ENCODE measurements at regions of chr2 and their contacts with region 1.

Region 1: DNA sequence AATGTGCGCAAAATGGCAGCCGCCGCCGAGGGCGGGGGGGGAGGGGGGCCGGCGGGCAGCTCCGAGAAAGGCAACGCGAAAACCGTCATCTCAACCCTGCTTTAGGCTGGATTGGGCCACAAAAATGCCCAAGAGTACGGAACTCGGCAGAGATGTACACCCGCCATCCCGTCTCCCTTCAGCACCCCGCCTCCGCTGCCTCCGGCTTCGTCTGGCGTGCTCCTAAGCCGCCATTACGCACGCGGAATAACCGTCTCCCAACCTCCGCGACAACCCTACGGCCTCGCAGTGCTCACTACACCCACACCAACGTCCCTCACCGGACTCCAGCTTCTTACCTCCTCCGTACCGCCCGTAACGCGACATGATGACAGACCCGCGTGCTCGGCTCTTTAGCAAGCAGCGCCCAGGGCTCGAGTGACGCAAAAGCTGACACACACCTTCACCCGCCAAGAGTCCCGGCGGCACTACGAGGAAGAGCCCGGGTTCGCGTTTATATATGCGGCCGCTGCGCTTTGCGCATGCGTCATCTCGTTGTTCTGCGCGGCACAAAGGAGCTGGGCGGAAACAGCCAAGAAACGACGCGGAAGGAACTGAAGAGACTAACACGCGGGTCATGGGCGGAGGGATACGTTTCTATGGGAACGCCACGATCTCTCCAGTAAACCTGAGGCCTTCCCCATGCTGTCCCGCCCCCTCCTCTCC is at the start of gene SRSF7:
- DNase-seq: peak; percentile 95 to 99 (median 96)
- H3K4me3 ChIP-seq: peak within 1 kb of the TSS; percentile 96
- H3K4me3 Mint-ChIP-seq: peak within 1 kb of the TSS; percentile 95 to 100 (median 99)
- H3K27ac ChIP-seq: peak within 1 kb of the TSS; percentile 98
- H3K27ac Mint-ChIP-seq: peak within 1 kb of the TSS; percentile 98 to 100 (median 100)
- H3K4me1 ChIP-seq: peaks cover 55% of the 10 kb centered on the region
- H3K4me1 Mint-ChIP-seq: peaks cover 61 to 67% (median 65%) of the 10 kb centered on the region in 3 donors
- H3K27me3 ChIP-seq: no peaks in the 10 kb centered on the region
- H3K27me3 Mint-ChIP-seq: peaks cover 0 to 18% of the 10 kb centered on the region in 2 donors
- total RNA-seq, gene SRSF7: 378 to 381 TPM

Region 2: GRCh38 chr2:38377050-38377828 is 373.8 kb before region 1 on chr2 and contains the start of gene ATL2:
- CTCF ChIA-PET with region 1: interaction called, 3 read pairs
- POLR2A ChIA-PET with region 1: interaction called, 11 read pairs
- DNase-seq: peak; percentile 89 to 95 (median 91)
- H3K4me3 ChIP-seq: peak within 1 kb of the TSS; percentile 72
- H3K4me3 Mint-ChIP-seq: peak within 1 kb of the TSS; percentile 94 to 98 (median 95)
- H3K27ac ChIP-seq: peak within 1 kb of the TSS; percentile 86
- H3K27ac Mint-ChIP-seq: peak within 1 kb of the TSS; percentile 94 to 98 (median 96)
- H3K4me1 ChIP-seq: peaks cover 44% of the 10 kb centered on the region
- H3K4me1 Mint-ChIP-seq: peaks cover 52 to 76% (median 67%) of the 10 kb centered on the region in 3 donors
- H3K27me3 ChIP-seq: no peaks in the 10 kb centered on the region
- H3K27me3 Mint-ChIP-seq: peaks cover 0 to 1% of the 10 kb centered on the region in 2 donors
- total RNA-seq, gene ATL2: 61.5 to 62.4 TPM

Region 3: GRCh38 chr2:38778687-38779082 is 27.6 kb after region 1 on chr2:
- CTCF ChIA-PET with region 1: no interaction called
- POLR2A ChIA-PET with region 1: interaction called, 26 read pairs
- DNase-seq: no peak
- H3K4me3 ChIP-seq: peak overlapping the region; percentile 86
- H3K4me3 Mint-ChIP-seq: peak overlapping the region; percentile 90 to 99 (median 96)
- H3K27ac ChIP-seq: peak overlapping the region; percentile 71
- H3K27ac Mint-ChIP-seq: peak overlapping the region; percentile 82 to 99 (median 97)
- H3K4me1 ChIP-seq: peaks cover 8% of the 10 kb centered on the region
- H3K4me1 Mint-ChIP-seq: peaks cover 14 to 22% (median 20%) of the 10 kb centered on the region in 3 donors
- H3K27me3 ChIP-seq: no peaks in the 10 kb centered on the region
- H3K27me3 Mint-ChIP-seq: peaks cover 17 to 18% of the 10 kb centered on the region in 2 donors